ENCODE measurements at regions of chr7 and their contacts with region 1.

Region 1: GRCh38 chr7:76262683-76263402 is 39.6 kb upstream of the HSPB1 start:
- DNase-seq: peak; percentile 55
- H3K4me3 ChIP-seq: no peak overlapping the region
- H3K27ac ChIP-seq: no peak overlapping the region
- H3K4me1 ChIP-seq: no peaks in the 10 kb centered on the region
- H3K27me3 ChIP-seq: peaks cover 18% of the 10 kb centered on the region
- CTCF ChIP-seq: peak; percentile 60

Region 2: DNA sequence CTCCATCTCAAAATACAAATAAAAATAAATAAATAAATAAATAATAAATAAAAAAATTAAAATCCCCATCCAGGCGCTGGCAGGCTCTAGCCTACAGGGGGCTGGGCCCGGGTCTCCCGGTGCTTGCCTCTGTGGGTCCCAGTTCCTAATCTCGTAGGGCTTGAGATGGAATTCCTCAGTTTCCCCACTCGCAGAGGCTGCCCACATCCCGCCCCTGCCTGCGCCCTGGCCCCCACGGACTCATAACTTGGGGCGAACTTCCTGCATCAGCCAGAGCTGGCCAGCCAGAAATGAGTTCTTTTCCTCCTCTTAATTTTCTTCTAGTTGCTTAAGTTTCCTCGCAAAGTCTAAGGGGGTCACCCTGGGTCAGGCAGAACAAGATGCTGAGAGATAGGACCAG is 83.2 kb before region 1 on chr7:
- intact Hi-C with region 1: loop called (anchors 5 kb)
- DNase-seq: no peak
- H3K4me3 ChIP-seq: no peak overlapping the region
- H3K27ac ChIP-seq: no peak overlapping the region
- H3K4me1 ChIP-seq: no peaks in the 10 kb centered on the region
- H3K27me3 ChIP-seq: no peaks in the 10 kb centered on the region
- CTCF ChIP-seq: no peak

Region 3: DNA sequence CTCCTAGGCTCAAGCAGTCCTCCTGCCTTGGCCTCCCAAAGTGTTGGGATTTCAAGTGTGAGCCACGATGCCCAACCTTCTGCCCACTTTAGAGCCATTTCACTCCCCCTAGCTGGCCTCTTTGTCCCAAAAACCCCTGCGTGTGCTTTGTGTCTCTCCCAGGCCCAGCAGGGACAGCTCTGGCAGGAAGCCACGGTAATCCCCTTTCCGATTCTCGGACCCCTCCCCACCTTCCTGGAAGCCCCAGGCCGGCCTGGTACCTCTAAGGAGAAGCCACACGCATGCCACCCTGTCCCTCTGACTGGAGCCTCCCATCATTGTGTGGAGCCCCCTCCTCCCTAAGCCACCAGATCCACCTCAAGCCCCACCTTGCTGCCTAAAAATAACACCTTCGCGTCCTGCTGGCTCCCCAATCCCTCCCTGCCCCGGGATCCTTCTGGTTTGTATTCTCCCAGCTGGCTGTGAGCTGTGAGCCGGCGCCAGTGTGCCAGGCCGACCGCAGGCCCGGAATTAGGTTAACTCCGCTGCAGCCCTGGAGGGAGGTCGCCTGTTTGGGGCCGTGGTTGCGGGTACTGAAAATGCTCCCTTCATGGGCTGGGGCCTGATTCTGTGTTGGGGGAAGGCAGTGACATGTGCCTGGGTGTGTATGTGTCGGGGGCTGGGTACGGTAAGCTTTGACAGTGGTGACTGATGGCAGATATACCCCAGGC is 77.5 kb before region 1 on chr7:
- intact Hi-C with region 1: loop called (anchors 5 kb)
- DNase-seq: no peak
- H3K4me3 ChIP-seq: no peak overlapping the region
- H3K27ac ChIP-seq: no peak overlapping the region
- H3K4me1 ChIP-seq: no peaks in the 10 kb centered on the region
- H3K27me3 ChIP-seq: no peaks in the 10 kb centered on the region
- CTCF ChIP-seq: no peak

Measured in colonic mucosa (tissue), 4 donors.